Dorsolateral prefrontal cortex (tissue), 120 donors: ENCODE measurements at regions of chr19 and their contacts with region 1.

Region 1: DNA sequence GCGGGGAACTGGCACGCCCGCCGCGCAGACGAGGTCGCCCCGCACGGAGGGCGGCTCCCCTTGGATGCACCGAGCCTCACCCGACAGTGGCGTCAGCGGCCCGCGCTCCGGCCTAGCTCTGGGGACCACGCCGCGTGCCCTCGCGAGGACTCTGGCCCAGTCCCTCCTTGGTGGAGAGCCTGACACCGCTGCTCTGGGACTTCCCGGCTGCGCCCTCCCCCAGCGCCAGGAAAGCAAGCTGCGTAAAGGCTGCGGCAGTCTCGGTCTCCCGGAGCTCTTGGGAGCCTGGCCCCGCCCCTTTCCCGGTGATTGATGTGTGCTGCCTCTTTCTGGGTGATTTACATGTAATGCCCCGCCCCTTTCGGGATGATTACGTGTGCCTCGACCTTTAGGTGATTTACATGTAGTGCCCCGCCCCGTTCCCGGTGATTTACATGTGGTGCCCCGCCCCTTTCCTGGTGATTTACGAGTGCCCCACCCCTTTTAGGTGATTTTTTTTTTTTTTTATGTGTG is at the start of gene LENG9:
- DNase-seq: peak; percentile 86 to 99 (median 98)
- H3K4me3 ChIP-seq: peak within 1 kb of the TSS; percentile 50 to 89 (median 72)
- H3K27ac ChIP-seq: peak within 1 kb of the TSS; percentile 61 to 97 (median 91)
- H3K27me3 ChIP-seq: peaks cover 0 to 3% (median 0%) of the 10 kb centered on the region in 45 donors
- CTCF ChIP-seq: peak in 3 of 56 donors; percentile 1 to 16 (median 12)
- total RNA-seq, gene LENG9: 0.94 to 5.4 (median 3.1) TPM

Region 2: DNA sequence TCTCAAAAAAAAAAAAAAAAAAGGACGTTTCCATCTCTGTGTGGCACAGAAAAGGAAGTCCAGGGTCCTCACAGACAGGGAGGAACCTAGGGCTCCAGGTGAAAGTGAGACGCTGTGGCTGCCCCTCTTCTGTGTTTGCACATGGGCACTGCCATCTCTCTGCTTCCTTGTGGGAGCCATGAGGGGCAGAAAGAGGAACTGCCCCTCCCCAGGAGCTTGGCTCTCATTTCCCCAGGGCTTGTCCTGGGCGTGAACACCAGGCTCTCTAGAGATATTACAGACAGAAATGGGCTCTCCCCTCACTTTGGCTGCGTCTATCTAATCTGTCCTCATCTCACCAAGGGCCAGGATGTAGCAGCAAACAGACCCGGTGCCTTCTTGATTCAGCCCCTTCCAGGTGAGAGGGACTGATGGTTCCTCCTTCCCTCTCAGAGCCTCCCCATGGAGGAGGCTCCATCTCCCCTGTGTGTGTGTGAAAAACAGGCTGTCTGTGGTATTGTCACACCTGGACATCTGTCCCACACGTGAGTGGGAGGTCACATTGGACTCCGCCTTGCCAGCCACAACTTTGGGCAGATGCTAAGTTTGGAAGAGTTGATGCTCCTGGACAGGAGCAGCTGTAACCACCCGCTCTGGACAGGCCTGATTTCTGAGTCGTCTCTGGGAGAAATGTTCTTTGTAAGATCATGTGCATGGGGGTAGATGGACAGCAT is 123.8 kb before region 1 on chr19:
- intact Hi-C with region 1: no loop called
- DNase-seq: no peak
- H3K4me3 ChIP-seq: no peak overlapping the region
- H3K27ac ChIP-seq: peak overlapping the region in 1 of 59 donors; percentile 26
- H3K27me3 ChIP-seq: peaks cover 0 to 5% (median 0%) of the 10 kb centered on the region in 45 donors
- CTCF ChIP-seq: no peak

Region 3: DNA sequence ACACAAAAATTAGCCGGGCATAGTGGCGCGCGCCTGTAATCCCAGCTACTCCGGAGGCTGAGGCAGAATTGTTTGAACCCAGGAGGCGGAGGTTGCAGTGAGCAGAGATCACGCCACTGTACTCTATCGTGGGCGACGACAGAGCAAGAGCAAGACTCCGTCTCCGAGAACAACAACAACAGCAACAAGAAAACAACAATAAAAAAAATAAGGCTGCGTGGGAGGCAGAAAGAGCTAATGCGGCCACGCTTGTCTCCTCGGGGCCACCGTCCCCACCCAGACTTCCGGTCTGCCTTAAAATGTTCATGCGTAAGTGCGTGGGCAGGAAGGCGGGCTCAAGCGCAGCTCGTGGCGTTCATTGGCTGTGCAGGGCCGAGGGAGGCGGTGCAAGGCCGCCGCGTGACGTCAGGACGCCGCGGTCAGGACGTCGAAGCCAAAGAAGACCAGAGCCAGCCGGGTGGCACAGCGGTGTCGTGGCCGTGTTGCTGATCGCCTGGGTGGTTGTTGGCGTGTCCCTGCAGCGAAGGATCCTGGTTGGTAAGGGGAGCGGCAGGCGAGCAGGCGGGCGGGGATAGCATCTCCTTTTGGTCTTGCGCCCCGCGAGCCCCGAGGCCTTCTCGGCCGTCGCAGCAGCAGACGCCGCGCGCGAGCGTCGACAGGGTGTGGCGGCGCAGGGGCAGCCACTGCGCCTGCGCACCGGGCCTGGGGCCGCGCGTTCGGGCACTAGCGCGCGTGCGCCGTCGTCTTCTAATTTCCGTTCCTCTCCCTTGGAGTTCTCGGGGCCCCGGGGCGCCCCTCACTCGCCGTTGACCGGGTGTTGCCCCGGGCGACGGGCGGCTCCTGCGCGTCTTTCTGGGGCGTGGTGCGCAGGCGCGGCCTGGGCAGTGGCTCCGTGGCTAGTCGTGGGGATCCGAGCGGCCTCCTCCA is 14.6 kb before region 1 on chr19 and contains the start of gene LENG8:
- intact Hi-C with region 1: loop called (anchors 2 kb)
- DNase-seq: peak; percentile 98 to 100 (median 99)
- H3K4me3 ChIP-seq: peak within 1 kb of the TSS; percentile 69 to 100 (median 93)
- H3K27ac ChIP-seq: peak within 1 kb of the TSS; percentile 83 to 99 (median 97)
- H3K27me3 ChIP-seq: no peaks in the 10 kb centered on the region
- CTCF ChIP-seq: peak in 25 of 56 donors; percentile 5 to 55 (median 16)
- total RNA-seq, gene LENG8: 122 to 322 (median 204) TPM